ENCODE measurements at regions of chr11 and their contacts with region 1.

Region 1: DNA sequence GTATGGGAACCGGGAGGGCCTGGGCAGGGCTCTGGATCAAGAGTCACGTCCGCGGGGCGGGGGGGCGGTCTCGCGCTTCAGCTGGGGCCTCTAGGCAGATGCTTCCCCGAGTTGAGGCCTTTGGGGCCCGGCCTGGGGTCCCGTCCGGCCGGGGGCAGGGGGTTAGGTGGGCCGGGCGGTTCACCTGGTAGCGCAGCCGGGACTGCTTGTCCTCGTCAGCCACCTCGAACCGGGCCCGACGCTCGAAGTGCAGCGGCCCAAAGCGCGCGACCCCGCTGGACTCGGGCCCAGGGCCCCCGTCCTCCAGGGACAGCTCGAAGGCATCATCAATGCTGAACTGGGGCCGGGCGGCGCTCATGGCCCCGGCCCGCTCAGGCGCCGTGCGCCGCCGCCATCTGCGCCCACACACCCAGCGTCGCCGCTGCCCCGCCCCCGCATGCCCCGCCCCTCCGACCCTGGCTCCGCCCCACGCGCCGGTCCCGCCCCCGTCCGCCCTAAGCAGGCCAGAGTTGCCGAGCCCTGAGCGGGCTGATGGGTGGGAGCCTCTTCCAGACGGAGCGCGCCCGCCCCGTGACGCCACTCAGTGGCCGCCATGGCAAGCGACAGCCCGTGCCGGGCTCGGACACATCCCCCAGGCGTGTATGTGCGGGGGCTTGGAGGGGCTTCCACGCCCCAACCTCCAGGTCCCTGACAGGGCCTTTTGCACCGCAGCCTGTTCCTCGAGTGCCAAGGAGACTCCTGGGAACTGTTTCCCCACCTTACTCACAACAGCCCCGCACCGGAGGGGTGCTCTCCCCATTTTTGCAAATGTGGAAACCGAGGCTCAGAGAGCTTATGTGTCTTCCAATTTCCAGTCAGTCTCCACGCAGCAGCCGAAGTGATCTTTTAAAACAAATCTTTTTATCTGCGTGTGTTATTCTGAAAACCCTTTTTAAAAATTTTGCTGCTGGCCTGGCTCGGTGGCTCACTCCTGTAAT is at the start of gene TMEM134:
- DNase-seq: peak; percentile 98
- total RNA-seq, gene TMEM134: 76.1 TPM

Region 2: DNA sequence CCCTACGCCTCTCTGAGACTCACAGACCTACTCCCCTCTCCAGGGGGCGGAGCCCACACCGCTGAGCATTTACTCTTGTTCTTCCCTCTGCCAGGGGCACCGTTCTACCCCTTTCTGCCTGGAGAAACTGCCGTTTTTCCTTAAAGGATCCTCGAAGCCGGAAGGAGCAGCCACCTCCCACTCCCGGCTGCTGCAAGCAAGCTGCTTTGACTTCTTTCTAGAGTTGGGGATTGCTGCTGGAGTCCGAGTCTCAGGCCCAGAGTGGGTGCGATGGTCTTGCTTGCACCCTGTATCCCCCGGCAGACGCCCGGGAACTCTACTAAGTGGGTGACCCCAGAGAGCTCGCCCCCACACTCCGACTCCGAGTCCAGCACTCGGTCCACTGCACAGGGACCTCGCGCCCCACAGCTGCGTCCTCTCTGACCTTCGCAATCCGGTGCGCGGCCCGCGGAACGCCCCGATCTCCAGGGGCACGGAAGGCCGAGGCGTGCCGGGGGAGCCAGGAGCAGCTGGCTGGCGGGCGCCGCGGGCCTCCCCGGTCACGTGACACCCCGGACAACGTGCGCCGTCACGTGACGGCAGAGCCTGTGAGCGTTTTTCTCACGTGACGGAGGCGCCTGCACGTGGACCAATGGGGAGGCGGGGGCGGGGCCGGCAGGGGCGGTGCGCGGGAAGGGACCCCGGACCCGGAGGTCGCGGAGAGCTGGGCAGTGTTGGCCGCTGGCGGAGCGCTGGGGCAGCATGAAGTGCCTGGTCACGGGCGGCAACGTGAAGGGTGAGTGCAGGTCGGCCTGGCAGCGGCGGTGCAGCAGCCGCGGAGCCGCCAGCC is 77.6 kb before region 1 on chr11 and contains the start of gene RAD9A:
- intact Hi-C with region 1: loop called (anchors 2 kb)
- DNase-seq: peak; percentile 98
- total RNA-seq, gene RAD9A: 4.8 TPM

Region 3: DNA sequence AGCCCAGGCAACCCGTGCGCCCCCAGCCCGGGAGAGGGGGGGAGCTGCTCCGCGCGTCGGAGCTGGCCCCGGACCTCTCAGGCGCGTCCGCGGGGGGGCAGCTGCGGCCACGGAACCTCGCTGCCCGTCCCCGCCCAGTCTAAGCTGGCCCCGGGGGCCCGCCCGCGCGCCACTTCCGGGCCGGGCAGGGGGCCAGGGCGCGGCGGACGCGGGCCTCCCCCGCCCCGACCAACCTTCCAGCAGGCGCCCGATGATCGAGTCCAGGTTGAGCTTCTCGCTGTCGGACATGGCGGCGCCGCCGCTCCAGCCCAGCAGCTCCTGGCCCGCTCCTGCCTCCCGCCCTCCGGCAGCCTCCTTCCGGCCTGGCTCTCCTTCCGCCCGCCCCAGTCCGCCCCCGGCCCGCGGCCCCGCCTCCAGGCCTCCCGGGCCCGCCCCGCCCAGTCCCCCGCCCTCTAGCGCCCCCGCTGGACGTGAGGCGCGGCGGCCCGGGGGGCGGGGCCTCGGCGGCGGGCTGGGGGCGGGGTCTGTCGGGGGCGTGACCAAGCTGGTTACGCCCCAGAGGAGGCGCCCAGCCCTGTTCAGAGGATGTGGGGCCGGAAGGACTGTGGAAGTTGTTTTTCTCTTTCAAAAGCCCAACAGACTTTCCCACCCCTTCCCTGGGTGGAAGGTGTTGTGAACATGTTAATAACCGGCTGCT is 67.5 kb before region 1 on chr11 and contains the start of gene PPP1CA:
- intact Hi-C with region 1: loop called (anchors 1 kb)
- DNase-seq: peak; percentile 97
- total RNA-seq, gene PPP1CA: 95.1 TPM

Region 4: GRCh38 chr11:67428052-67428914 is 40.8 kb before region 1 on chr11 and contains the start of gene RPS6KB2:
- intact Hi-C with region 1: loop called (anchors 2 kb)
- DNase-seq: peak; percentile 99
- total RNA-seq, gene RPS6KB2: 23.2 TPM

Region 5: DNA sequence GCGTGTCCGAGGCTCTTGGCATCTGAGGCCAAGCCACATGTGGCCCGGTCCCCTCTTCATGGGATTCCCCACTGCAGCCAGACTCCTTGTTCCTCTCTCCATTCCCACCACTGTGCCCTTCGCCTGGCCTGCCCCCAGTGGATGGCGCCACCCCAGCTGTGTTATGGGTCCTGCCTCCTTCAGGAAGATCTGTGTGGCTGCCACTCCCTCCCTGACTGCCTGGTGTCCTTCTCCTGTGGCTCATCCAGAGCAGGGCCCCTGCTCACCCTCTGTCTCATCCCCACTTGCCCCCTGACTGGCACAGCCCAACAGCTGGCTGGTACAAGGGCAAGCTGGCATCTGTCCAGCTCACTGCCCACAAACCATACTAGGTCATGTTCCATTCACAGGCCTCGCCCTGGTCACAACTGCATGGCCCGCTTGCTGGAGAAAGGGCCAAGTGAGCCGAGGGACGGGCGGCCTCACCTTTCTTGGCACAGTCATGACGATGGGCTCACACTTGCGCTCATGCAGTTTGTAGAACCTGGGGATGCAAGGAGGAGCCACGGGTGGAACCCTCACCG is 29.7 kb before region 1 on chr11:
- intact Hi-C with region 1: no loop called
- DNase-seq: no peak

Measured in cardiac septum (tissue), 1 donor.